Dendritic cell treated with granulocyte-macrophage colony-stimulating factor and Interleukin-4, amounts not matched to agents 40 ng/mL and 50 ng/mL, for 4 days (primary cell): ENCODE measurements at regions of chr9 and their contacts with region 1.

Region 1: GRCh38 chr9:36407122-36407723 is 7.2 kb upstream of the RNF38 start:
- H3K4me3 Mint-ChIP-seq: no peak overlapping the region
- H3K27ac Mint-ChIP-seq: peak overlapping the region; percentile 32
- H3K4me1 Mint-ChIP-seq: peaks cover 23% of the 10 kb centered on the region
- H3K27me3 Mint-ChIP-seq: no peaks in the 10 kb centered on the region

Region 2: GRCh38 chr9:36102742-36103495 is 304.3 kb before region 1 on chr9:
- intact Hi-C with region 1: no loop called
- H3K4me3 Mint-ChIP-seq: no peak overlapping the region
- H3K27ac Mint-ChIP-seq: peak overlapping the region; percentile 43
- H3K4me1 Mint-ChIP-seq: peaks cover 8% of the 10 kb centered on the region
- H3K27me3 Mint-ChIP-seq: no peaks in the 10 kb centered on the region

Region 3: GRCh38 chr9:36450110-36450732 is 43.0 kb after region 1 on chr9:
- intact Hi-C with region 1: loop called (anchors 1 kb)
- H3K4me3 Mint-ChIP-seq: no peak overlapping the region
- H3K27ac Mint-ChIP-seq: no peak overlapping the region
- H3K4me1 Mint-ChIP-seq: peaks cover 20% of the 10 kb centered on the region
- H3K27me3 Mint-ChIP-seq: no peaks in the 10 kb centered on the region

Region 4: DNA sequence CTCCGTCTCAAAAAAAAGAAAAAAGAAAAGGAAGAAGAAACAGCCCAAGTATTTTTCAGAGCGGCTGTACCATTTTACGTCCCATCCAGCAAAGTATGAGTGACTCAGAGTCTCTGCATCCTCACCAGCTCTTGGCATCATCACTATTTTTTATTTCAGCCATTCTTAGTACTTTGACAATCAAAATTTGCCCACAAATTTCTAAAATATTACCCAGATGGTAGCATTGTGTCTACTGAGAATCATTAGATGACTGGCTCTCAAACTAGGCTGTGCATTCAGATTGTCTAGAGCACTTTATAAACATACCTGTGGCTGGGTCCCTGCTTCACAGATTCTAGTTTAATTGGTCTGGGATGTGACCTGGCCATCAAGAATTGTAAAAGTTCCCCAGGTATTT is 143.9 kb after region 1 on chr9:
- intact Hi-C with region 1: loop called (anchors 1 kb)
- H3K4me3 Mint-ChIP-seq: no peak overlapping the region
- H3K27ac Mint-ChIP-seq: no peak overlapping the region
- H3K4me1 Mint-ChIP-seq: peaks cover 19% of the 10 kb centered on the region
- H3K27me3 Mint-ChIP-seq: peaks cover 2% of the 10 kb centered on the region

Region 5: GRCh38 chr9:36665921-36666431 is 258.8 kb after region 1 on chr9:
- intact Hi-C with region 1: no loop called
- H3K4me3 Mint-ChIP-seq: peak overlapping the region; percentile 7
- H3K27ac Mint-ChIP-seq: peak overlapping the region; percentile 62
- H3K4me1 Mint-ChIP-seq: peaks cover 12% of the 10 kb centered on the region
- H3K27me3 Mint-ChIP-seq: no peaks in the 10 kb centered on the region

Region 6: GRCh38 chr9:36728651-36729520 is 321.7 kb after region 1 on chr9:
- intact Hi-C with region 1: loop called (anchors 5 kb)
- H3K4me3 Mint-ChIP-seq: no peak overlapping the region
- H3K27ac Mint-ChIP-seq: no peak overlapping the region
- H3K4me1 Mint-ChIP-seq: peaks cover 8% of the 10 kb centered on the region
- H3K27me3 Mint-ChIP-seq: no peaks in the 10 kb centered on the region